GM10248 (cell line): ENCODE measurements at regions of chr15 and their contacts with region 1.

Region 1: DNA sequence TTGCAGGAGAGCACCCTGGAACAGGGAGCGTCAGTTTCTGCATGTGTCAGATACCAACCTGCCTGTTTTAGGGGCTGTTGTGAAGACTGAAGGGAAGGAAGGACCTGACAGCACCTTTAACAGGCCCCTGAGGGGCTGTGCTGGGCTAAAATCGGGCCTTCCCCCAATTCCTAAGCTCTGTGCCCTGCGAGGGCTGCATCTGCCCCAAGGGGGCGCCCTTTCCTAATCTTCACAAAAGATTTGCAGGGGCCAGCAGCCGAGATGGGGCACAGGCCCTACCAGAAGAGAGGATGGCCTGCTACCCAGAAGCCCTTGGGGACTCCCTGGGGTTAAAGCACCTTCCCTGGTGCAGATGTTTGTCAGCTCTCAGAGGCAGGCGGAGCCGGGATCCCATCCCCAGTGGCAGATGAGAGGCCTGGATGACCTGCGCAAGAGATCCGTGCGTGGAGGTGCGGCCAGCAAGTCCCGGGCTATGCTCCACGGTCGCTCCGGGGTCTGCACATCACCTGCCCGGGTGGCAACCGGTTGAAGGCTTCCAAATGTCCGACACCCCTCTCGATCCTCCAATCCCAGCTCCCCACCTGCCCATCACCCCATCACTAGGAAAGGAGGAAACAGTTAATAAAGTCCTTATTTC is 53.6 kb downstream of the RHCG start:
- DNase-seq: peak; percentile 82
- CTCF ChIP-seq: peak; percentile 51

Region 2: GRCh38 chr15:89430530-89431341 is 12.1 kb before region 1 on chr15:
- CTCF ChIA-PET with region 1: interaction called, 51 read pairs
- POLR2A ChIA-PET with region 1: no interaction called
- DNase-seq: peak; percentile 91
- CTCF ChIP-seq: peak; percentile 98

Region 3: GRCh38 chr15:89457097-89457496 is 14.3 kb after region 1 on chr15:
- CTCF ChIA-PET with region 1: interaction called, 22 read pairs
- POLR2A ChIA-PET with region 1: no interaction called
- DNase-seq: no peak
- CTCF ChIP-seq: no peak

Region 4: DNA sequence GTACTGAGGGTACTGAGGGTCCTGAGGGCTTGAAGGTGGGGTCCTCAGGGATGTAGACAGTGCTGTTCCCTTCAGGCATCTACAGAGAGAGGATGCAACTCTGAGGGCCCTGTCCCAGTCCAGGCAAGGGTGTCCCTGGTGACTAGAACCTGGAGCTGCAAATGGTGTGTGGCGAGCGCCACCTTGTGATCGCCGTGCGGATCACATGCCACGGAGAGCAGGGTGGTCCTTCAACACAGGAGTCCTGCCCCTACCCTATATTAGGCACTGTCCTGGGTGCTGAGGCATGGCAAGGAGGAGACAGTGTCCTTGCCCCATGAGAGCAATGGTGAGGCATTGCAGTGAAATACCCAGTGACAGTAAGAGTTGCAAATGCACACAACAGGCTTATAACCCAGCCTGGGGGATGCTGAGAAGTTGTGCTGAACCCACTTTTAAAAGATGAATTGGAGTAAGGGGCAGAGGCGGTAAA is 30.0 kb after region 1 on chr15:
- CTCF ChIA-PET with region 1: interaction called, 67 read pairs
- POLR2A ChIA-PET with region 1: no interaction called
- DNase-seq: peak; percentile 79
- CTCF ChIP-seq: peak; percentile 90

Region 5: DNA sequence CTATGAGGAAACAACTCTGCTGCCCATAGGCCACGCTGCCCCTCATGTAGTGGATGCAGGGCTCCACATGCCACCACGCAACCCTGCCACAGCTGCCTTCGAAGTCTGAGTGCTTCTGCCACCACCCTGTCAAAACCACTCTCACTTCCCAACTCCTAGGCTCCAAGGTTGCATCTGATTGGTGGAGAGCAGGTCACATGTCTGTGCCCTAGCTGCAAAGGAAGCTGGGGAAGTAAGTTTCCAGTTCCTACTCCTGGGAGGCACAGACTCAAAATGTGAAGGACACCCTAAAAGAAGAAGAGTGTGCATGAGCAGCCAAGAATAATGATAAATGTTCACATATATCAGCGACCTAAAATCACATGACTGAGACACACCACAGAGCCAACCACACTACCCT is 100.6 kb after region 1 on chr15:
- CTCF ChIA-PET with region 1: no interaction called
- POLR2A ChIA-PET with region 1: no interaction called
- DNase-seq: no peak
- CTCF ChIP-seq: no peak